ENCODE measurements at regions of chr3 and their contacts with region 1.

Region 1: DNA sequence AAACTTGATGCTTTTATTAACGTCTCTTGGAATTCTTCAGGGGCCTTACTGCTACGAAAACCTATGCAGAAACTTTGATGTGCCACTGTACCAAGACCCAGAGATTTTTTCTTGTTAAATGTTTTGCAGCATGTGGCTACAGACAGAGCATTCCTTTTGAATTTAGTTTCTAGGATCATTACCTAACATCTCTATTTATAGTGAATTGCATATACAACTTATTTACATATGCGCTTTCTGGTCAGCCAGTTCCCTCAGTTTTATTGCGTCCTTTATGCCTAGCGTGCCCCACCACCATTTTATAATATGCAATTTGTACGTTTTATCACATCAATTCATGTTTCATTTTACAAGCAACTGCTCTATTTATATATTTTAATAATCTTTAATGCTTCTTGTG is 46.2 kb upstream of the AGTR1 start:
- DNase-seq: no peak
- H3K4me3 ChIP-seq: no peak overlapping the region
- H3K27ac ChIP-seq: no peak overlapping the region
- H3K4me1 ChIP-seq: peaks cover 0 to 7% of the 10 kb centered on the region in 2 donors
- H3K27me3 ChIP-seq: no peaks in the 10 kb centered on the region
- CTCF ChIP-seq: no peak

Region 2: DNA sequence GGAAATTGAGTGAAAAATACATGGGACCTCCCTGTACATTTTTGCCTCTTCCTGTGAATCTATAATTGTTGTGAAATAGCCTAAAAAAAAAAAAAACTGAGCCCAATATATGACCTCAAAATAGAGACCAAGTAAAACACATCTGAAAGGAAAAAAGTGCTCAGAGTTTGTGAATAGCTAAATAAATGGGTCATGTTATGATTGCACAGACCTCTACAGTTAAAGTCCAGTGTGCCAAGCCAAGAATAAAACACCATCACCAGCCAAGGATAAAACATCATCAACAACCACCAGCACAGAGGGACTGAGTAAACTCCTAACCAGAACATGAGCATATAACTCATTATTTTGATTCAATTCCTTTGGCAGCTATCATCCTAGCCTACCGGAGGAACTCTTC is 69.4 kb before region 1 on chr3:
- intact Hi-C with region 1: loop called (anchors 5 kb)
- DNase-seq: peak in 1 of 2 donors; percentile 70
- H3K4me3 ChIP-seq: no peak overlapping the region
- H3K27ac ChIP-seq: peak overlapping the region in 1 of 2 donors; percentile 45
- H3K4me1 ChIP-seq: peaks cover 3 to 14% of the 10 kb centered on the region in 2 donors
- H3K27me3 ChIP-seq: no peaks in the 10 kb centered on the region
- CTCF ChIP-seq: no peak

Region 3: DNA sequence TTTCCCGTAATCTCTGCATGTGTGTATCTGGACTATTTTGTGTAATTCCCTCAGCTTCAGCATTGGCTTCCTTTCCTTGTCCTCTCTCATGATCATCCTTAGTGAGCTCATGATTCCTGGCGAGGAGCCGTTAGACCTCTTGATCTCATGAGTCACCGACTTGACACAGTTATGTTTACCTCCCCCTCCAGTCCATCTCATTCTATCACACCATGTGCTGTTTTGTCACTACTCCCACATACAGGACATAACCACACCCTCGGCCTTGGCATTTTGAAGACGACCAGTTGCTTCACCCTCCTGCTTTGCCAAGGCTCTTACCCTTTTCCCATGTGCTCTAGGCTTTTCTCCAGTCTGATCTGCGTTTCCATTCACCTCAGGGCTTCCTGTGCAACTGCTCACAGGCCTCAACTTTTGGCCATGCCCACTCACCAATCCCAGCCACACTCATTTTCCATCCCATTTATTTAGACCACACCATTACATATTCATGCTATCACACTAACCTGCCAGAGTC is 528.6 kb after region 1 on chr3:
- intact Hi-C with region 1: no loop called
- DNase-seq: peak; percentile 78 to 95
- H3K4me3 ChIP-seq: no peak overlapping the region
- H3K27ac ChIP-seq: peak overlapping the region; percentile 35 to 64
- H3K4me1 ChIP-seq: peaks cover 0 to 15% of the 10 kb centered on the region in 2 donors
- H3K27me3 ChIP-seq: no peaks in the 10 kb centered on the region
- CTCF ChIP-seq: no peak

Measured in ascending aorta (tissue), 2 donors.